ENCODE measurements at regions of chr1 and their contacts with region 1.

Region 1: DNA sequence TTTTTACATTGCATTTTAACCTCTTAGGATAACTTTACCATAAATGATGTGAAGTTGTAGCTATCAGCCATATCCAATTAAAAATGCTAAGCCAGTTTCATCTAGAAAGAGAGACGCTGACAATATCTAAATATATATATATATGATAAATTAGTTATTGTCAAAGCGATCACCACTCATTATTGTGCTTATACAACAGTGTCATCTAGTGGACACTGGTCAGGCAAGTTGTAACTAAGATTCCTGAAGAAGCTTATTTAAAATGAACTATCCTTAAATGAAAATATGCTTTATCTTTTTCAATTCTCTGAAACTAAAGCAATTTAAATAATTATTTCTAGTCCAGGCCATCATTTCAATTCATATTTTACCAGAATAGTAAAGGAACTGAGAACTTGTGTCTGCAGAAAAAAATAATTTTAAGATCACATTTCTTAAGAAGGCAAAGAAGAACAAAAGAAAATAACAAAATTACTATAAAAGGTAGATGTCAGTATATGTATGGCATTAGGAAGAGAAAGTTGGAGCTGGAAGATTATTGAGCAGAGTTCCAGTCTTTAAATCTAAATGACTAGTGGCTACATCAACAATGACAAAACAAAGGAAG is 193.3 kb upstream of the SNX7 start:
- DNase-seq: peak; percentile 84
- H3K4me3 ChIP-seq: no peak overlapping the region
- H3K27ac ChIP-seq: peak overlapping the region; percentile 47
- H3K4me1 ChIP-seq: peaks cover 7% of the 10 kb centered on the region
- H3K27me3 ChIP-seq: no peaks in the 10 kb centered on the region
- CTCF ChIP-seq: peak; percentile 48 to 62
- POLR2A ChIP-seq: no peak

Region 2: DNA sequence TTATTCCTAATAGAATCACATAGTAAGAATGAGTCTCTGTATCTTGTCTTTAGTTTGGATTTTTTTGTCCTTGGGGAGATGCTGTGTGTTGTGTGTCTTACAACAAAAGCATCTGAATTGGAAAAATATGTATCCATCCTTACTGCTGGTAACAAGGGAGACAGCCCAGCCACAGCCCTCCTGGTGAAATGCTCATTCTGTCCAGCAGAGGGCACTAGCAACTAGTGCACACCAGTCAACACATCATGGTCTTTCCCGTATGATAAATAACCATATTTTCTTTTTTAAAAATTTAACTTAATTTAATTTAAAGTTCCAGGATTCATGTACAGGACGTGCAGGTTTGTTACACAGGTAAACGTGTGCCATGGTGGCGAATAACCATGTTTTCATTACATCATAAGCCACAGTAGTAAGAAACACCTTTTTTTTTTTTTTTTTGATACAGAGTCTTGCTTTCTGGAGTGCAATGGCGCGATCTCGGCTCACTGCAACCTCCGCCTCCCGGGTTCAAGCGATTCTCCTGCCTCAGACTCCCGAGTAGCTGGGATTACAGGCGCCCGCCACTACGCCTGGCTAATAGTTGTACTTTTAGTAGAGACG is 1501.6 kb before region 1 on chr1:
- CTCF ChIA-PET with region 1: interaction called, 20 read pairs
- POLR2A ChIA-PET with region 1: no interaction called
- dilution Hi-C with region 1: no loop called
- intact Hi-C with region 1: loop called (anchors 1 kb)
- DNase-seq: peak; percentile 84
- H3K4me3 ChIP-seq: peak overlapping the region in 1 of 3 experiments; percentile 38
- H3K27ac ChIP-seq: no peak overlapping the region
- H3K4me1 ChIP-seq: no peaks in the 10 kb centered on the region
- H3K27me3 ChIP-seq: peaks cover 7 to 12% of the 10 kb centered on the region in 2 experiments
- CTCF ChIP-seq: peak; percentile 81 to 85
- POLR2A ChIP-seq: no peak

Region 3: DNA sequence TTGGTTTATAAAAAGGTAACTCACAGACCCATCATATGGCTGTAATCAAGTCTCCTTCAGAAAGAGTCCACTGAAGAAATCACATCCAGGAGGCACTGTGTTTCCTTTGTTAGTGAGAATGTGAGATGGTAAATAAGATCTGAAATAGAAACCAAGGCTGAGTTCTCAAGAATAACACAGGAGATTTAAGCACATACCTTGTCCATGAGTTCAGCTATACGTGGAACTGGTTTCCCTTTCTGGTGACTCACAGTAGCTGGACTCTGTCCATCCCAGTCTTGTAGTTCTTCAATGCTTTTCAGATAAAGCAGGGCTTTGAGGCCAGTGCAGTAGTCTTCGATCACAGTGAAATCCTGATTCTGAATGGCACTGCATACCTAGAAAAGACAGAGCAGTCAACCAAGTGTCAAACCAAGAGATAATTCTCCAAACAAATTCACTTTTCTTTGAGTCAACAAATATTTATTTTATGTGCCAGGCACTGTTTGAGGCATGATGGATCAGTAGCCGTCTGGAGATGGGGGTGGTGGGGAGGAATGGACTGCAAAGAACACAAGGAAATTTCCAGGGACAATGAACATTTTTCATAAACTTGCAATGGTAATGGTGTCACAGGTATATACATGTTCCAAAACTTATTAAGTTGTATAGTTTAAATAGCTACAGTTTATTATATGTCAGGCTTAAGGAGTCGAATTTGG is 1275.2 kb before region 1 on chr1:
- CTCF ChIA-PET with region 1: interaction called, 6 read pairs
- POLR2A ChIA-PET with region 1: no interaction called
- dilution Hi-C with region 1: no loop called
- intact Hi-C with region 1: loop called (anchors 5 kb)
- DNase-seq: peak; percentile 97
- H3K4me3 ChIP-seq: peak overlapping the region in 1 of 3 experiments; percentile 15
- H3K27ac ChIP-seq: peak overlapping the region; percentile 73
- H3K4me1 ChIP-seq: peaks cover 15% of the 10 kb centered on the region
- H3K27me3 ChIP-seq: no peaks in the 10 kb centered on the region
- CTCF ChIP-seq: no peak
- POLR2A ChIP-seq: no peak

Region 4: DNA sequence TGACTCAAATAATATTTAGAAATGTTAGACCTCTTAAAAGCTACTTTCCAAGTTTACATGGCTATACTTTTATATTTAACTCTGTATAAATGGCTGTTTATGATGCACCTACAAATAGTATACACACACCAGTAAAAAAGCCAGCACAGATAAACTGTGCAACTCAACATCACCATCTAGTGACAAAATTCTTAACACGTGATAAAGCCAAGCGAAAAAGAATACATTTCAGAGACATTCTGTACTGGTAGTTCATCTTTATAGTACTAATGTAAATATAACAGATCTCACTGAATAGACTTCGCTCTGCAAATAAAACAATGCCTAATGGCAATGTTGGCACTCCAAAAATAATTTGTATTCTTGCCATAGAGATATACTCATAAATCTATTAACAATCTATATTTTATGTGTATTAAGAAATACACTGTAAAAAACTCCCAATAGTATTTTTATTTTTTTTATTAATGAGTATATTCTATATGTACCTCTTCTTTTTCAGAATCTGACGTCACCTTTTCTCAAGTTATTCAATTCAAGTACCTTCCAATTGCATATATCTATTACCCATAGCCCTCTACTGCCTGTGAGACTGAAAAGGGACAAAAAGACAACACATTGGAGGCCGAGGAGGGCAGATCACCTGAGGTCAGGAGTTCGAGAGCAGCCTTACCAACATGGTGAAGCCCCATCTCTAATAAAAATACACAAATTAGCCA is 647.6 kb before region 1 on chr1:
- CTCF ChIA-PET with region 1: interaction called, 8 read pairs
- POLR2A ChIA-PET with region 1: no interaction called
- dilution Hi-C with region 1: no loop called
- intact Hi-C with region 1: loop called (anchors 2 kb)
- DNase-seq: peak; percentile 62
- H3K4me3 ChIP-seq: no peak overlapping the region
- H3K27ac ChIP-seq: no peak overlapping the region
- H3K4me1 ChIP-seq: no peaks in the 10 kb centered on the region
- H3K27me3 ChIP-seq: no peaks in the 10 kb centered on the region
- CTCF ChIP-seq: peak; percentile 21 to 29
- POLR2A ChIP-seq: no peak

Region 5: DNA sequence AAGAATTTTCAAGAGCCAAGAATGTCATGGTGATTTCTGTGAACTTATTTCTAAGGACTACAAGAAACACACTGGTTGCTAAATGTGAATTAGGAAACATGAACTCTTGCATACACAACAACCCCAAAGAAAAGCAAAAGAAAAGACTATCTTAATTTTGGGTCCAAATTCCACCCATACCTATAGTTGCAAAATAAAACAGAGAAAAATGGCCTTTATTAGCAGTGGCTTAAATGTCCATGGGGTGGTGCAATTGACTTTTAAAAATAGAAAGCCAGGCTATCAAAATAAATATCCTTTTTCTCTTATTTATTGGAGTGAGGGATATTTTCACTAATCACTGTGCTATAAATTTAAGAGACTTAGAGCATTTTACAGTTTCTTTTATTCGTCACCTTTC is 466.4 kb before region 1 on chr1:
- CTCF ChIA-PET with region 1: interaction called, 16 read pairs
- POLR2A ChIA-PET with region 1: no interaction called
- dilution Hi-C with region 1: no loop called
- intact Hi-C with region 1: loop called (anchors 5 kb)
- DNase-seq: no peak
- H3K4me3 ChIP-seq: no peak overlapping the region
- H3K27ac ChIP-seq: no peak overlapping the region
- H3K4me1 ChIP-seq: peaks cover 24% of the 10 kb centered on the region
- H3K27me3 ChIP-seq: no peaks in the 10 kb centered on the region
- CTCF ChIP-seq: no peak
- POLR2A ChIP-seq: no peak

Region 6: DNA sequence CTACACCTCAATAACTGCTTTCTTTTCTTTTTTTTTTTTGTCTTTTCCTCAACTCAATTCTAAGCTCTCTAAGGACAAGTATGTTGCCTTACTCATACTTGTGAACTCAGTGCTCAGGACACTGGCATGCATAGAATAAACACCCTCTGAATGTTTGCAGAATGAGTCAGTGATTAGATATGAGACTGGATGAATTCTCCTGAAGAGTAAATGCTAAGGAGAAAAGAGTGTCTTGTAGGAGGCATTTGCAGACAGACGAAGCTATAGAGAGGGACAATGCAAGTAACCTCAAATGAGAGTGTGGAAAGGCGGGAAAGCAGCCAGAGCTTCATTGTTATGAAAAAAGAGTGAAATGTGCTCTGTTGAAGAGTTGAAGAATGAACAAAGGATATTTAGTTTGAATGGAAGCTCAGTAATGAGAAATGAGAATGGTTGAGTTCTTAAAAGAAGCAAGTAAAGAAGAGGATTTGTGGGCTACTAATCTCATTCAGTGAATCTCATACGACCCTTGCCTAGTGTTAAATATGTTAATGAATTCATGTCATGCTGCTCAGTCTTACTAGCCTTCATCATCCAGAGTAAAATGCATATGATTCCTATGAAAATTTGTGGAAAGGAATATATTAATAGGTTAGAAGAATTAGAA is 381.3 kb before region 1 on chr1:
- CTCF ChIA-PET with region 1: interaction called, 23 read pairs
- POLR2A ChIA-PET with region 1: interaction called, 3 read pairs
- dilution Hi-C with region 1: no loop called
- intact Hi-C with region 1: no loop called
- DNase-seq: peak; percentile 95
- H3K4me3 ChIP-seq: peak overlapping the region in 1 of 3 experiments; percentile 90
- H3K27ac ChIP-seq: peak overlapping the region; percentile 71
- H3K4me1 ChIP-seq: peaks cover 46% of the 10 kb centered on the region
- H3K27me3 ChIP-seq: no peaks in the 10 kb centered on the region
- CTCF ChIP-seq: no peak
- POLR2A ChIP-seq: no peak

Region 7: GRCh38 chr1:98260839-98261238 is 207.4 kb before region 1 on chr1:
- CTCF ChIA-PET with region 1: interaction called, 12 read pairs
- POLR2A ChIA-PET with region 1: no interaction called
- dilution Hi-C with region 1: no loop called
- intact Hi-C with region 1: loop called (anchors 5 kb)
- DNase-seq: peak; percentile 12
- H3K4me3 ChIP-seq: no peak overlapping the region
- H3K27ac ChIP-seq: no peak overlapping the region
- H3K4me1 ChIP-seq: peaks cover 41% of the 10 kb centered on the region
- H3K27me3 ChIP-seq: no peaks in the 10 kb centered on the region
- CTCF ChIP-seq: peak in 1 of 2 donors; percentile 37
- POLR2A ChIP-seq: no peak

Region 8: DNA sequence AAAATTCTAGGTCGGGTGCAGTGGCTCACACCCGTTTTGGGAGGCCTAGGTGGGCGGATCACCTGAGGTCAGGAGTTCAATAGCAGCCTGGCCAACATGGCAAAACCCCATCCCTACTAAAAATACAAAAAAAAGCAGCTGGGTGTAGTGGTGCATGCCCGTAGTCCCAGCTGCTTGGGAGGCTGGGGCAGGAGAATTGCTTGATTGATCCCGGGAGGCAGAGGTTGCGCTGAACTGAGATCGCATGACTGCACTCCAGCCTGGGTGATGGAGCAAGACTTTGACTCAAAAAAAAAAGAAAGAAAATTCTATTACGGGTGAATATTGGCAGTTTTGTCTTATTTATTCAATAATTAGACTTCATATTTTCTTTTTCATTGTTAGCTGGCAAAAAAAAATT is 255.4 kb after region 1 on chr1:
- CTCF ChIA-PET with region 1: no interaction called
- POLR2A ChIA-PET with region 1: no interaction called
- dilution Hi-C with region 1: no loop called
- intact Hi-C with region 1: no loop called
- DNase-seq: no peak
- H3K4me3 ChIP-seq: no peak overlapping the region
- H3K27ac ChIP-seq: no peak overlapping the region
- H3K4me1 ChIP-seq: no peaks in the 10 kb centered on the region
- H3K27me3 ChIP-seq: no peaks in the 10 kb centered on the region
- CTCF ChIP-seq: no peak
- POLR2A ChIP-seq: no peak

Measured in endothelial cell of umbilical vein (primary cell).